ENCODE measurements at regions of chr9 and their contacts with region 1.

Region 1: GRCh38 chr9:71897577-71897976 is 13.4 kb downstream of the ABHD17B start:
- DNase-seq: no peak
- ATAC-seq: no peak
- H3K4me3 ChIP-seq: no peak overlapping the region
- H3K27ac ChIP-seq: no peak overlapping the region
- H3K4me1 ChIP-seq: no peaks in the 10 kb centered on the region; the same call in none of the 2 replicates
- H3K27me3 ChIP-seq: no peaks in the 10 kb centered on the region
- CTCF ChIP-seq: no peak
- POLR2A ChIP-seq: no peak
- RAD21 ChIP-seq: no peak

Region 2: DNA sequence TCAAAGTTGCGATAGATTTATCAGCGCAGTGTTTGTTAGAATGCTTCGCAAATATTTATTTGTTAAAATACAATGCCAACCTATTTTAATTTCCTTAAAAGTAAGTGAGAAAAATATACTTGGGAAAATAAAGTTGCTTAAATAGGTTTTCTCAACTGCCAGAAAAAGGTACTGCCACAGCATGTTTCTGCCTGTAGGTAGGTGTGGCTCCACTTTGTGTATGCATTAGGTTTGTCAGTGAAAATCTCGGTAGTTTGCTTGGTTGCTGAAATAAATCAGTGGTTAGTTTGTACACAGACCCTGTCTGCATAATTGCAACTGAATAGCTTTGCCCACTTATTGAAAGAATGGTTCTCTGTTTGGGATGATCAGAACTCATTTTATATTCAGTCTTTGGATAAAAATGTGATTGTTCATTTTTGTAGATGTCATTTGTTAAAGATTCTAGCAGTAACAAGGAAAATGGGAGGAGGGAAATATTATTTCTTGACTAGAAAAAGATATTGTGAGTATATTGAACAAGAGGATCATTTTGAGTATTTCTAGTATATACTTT is 39.6 kb after region 1 on chr9:
- CTCF ChIA-PET with region 1: no interaction called
- POLR2A ChIA-PET with region 1: no interaction called
- dilution Hi-C with region 1: no loop called
- in situ Hi-C with region 1: no loop called
- intact Hi-C with region 1: loop called (anchors 5 kb)
- DNase-seq: no peak
- ATAC-seq: no peak
- H3K4me3 ChIP-seq: no peak overlapping the region
- H3K27ac ChIP-seq: no peak overlapping the region
- H3K4me1 ChIP-seq: peaks cover 4% of the 10 kb centered on the region; the same call in 1 of the 2 replicates
- H3K27me3 ChIP-seq: no peaks in the 10 kb centered on the region
- CTCF ChIP-seq: no peak
- POLR2A ChIP-seq: no peak
- RAD21 ChIP-seq: no peak

Measured in IMR-90 (cell line).